ENCODE measurements at regions of chr20 and their contacts with region 1.

Region 1: DNA sequence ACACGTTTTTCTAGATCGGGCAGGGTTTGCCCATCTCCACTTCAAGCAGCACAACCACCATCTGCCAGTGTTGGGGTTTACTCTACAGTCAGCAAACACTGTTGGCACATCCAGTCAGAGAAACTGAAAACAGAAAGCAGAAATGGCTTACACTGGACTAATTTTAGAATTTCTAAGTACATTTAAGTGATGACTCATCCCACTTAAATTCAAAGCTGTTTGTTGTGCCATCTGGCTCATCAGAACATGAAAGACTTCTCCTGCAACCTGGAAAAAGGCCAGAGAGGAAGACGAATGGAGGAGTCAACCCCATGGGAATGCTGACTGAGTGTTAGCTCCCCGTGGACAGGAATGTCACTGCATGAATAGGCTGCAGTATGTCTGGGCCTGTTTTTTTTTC is 21.8 kb downstream of the FAM209B start:
- DNase-seq: peak; percentile 35 to 55
- H3K4me3 ChIP-seq: no peak overlapping the region
- H3K4me3 Mint-ChIP-seq: no peak overlapping the region
- H3K27ac Mint-ChIP-seq: no peak overlapping the region
- H3K4me1 ChIP-seq: peaks cover 20% of the 10 kb centered on the region
- H3K4me1 Mint-ChIP-seq: peaks cover 21% of the 10 kb centered on the region
- H3K27me3 ChIP-seq: no peaks in the 10 kb centered on the region
- H3K27me3 Mint-ChIP-seq: no peaks in the 10 kb centered on the region
- CTCF ChIP-seq: no peak

Region 2: DNA sequence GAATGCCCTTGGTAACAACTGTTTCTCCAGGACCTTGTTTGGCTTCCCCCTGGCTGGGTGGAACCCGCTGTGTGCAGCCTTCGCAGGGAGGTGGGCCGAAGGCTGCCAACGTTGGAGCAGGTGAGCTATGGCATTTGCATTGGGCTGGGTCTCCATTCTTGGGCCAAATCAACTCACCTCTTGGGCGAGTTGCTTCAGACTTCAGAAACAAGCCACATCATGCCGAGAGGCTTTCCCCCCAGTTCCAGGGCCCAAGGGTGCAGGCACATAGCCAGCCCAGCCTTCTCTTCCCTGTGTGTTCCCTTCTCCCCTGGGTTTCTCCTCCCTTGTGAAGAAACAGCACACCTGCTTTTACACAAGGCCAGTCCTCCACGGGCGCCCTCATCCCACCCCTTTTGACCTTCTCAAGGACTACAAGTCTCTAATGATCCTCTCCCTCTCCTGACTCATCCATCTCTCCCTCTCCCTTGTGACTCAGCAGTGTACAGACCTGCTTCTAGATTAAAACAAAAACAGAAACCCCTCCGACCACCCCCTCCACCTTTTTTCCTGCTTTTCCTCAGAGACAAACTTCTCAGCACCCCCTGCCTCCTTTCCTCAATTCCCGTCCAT is 19.8 kb after region 1 on chr20:
- CTCF ChIA-PET with region 1: interaction called, 62 read pairs
- POLR2A ChIA-PET with region 1: no interaction called
- intact Hi-C with region 1: loop called (anchors 1 kb)
- DNase-seq: no peak
- H3K4me3 ChIP-seq: no peak overlapping the region
- H3K4me3 Mint-ChIP-seq: no peak overlapping the region
- H3K27ac Mint-ChIP-seq: peak overlapping the region; percentile 4
- H3K4me1 ChIP-seq: peaks cover 12% of the 10 kb centered on the region
- H3K4me1 Mint-ChIP-seq: peaks cover 19% of the 10 kb centered on the region
- H3K27me3 ChIP-seq: no peaks in the 10 kb centered on the region
- H3K27me3 Mint-ChIP-seq: no peaks in the 10 kb centered on the region
- CTCF ChIP-seq: no peak

Region 3: DNA sequence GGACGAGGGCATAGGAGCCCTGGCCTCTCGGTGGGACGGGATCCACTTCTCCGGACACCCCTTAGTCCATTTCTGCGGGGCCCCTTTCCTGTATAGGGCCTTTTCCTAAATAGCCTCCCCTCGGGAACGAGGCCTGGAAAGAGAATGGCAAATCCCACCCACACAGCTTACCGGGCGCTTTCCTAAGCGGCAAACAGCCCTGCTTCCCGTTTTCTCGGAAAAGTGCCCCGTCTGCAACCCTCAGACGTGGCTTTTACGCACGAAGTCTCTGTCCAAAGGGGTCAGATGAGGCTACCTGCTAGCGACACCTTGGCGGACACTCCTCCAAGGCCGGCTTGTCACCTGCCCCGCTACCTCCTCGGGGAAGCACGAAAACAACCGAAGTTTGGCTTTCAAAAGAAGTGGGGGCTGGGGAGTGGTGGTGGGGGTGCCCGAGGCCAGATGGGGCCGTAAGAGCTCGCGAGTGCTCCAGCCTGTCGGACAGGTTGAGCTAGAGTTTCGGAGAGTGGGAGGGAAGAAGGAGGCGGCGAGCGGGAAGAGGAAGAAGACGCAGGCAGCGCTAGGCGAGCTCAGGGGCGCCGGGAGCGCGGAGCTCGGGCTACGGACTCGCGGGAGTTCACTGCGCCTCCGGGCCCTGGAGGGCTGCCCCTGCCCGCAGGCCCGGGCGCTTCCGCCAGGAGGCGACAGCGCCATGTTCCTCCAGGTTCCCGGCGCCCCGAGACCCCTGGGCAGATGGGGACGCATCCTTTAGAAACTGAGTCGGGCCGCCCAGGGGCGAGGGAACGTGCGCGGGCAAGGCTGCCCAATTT is 75.0 kb after region 1 on chr20:
- CTCF ChIA-PET with region 1: interaction called, 15 read pairs
- POLR2A ChIA-PET with region 1: no interaction called
- intact Hi-C with region 1: loop called (anchors 1 kb)
- DNase-seq: peak; percentile 94 to 95
- H3K4me3 ChIP-seq: peak overlapping the region; percentile 75
- H3K4me3 Mint-ChIP-seq: peak overlapping the region; percentile 79
- H3K27ac Mint-ChIP-seq: peak overlapping the region; percentile 64
- H3K4me1 ChIP-seq: peaks cover 6% of the 10 kb centered on the region; the same call in 1 of the 2 replicates
- H3K4me1 Mint-ChIP-seq: peaks cover 6% of the 10 kb centered on the region
- H3K27me3 ChIP-seq: no peaks in the 10 kb centered on the region
- H3K27me3 Mint-ChIP-seq: no peaks in the 10 kb centered on the region
- CTCF ChIP-seq: peak; percentile 95 to 96

Region 4: DNA sequence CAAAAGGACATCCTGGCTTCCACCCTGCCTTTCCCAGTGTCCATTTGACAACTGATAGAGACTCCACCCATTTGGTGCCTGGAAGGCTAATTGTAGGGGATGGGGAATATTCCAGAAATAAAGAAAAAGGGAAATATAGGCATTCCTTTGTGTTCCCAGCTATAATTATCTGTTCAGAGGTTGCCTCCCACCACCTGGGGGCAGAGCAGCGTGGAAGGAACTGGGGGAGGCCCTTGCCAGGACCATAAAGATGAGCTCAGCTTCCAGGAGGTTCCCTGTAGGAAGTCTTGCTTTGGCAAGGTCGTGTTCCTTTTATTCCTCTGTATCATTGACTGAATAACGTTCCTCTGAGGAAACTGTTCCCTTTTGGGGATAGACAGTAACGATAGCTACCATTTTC is 288.9 kb after region 1 on chr20:
- CTCF ChIA-PET with region 1: interaction called, 4 read pairs
- POLR2A ChIA-PET with region 1: no interaction called
- intact Hi-C with region 1: loop called (anchors 10 kb)
- DNase-seq: peak in 1 of 2 experiments; percentile 59
- H3K4me3 ChIP-seq: no peak overlapping the region
- H3K4me3 Mint-ChIP-seq: no peak overlapping the region
- H3K27ac Mint-ChIP-seq: no peak overlapping the region
- H3K4me1 ChIP-seq: no peaks in the 10 kb centered on the region
- H3K4me1 Mint-ChIP-seq: no peaks in the 10 kb centered on the region
- H3K27me3 ChIP-seq: no peaks in the 10 kb centered on the region; the same call in 1 of the 2 replicates
- H3K27me3 Mint-ChIP-seq: peaks cover 8% of the 10 kb centered on the region
- CTCF ChIP-seq: peak; percentile 39 to 61

Region 5: DNA sequence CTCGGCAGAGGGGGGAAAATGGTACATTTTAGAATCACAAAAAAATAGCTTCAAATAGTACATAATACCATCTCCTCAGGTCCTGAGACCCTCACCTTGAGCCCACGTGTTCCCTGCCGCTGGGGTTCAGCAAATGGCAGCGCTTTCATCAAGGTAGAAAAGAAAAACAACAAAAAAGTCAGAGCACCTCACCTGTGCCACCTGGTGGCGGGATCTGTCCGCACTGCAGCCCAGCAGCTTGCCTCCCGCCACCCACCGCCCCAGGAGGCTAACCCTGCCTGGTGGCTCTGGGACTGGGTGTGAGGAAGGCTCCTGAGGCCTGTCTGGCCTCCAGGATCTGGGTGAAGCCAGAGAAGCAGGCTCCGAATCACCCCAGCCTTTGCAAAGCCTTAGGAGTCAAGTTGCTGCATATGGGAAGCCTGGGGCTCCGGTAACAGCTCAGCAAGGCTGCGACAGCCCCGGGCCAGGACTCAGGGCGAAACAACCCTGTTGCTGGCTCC is 440.8 kb after region 1 on chr20:
- CTCF ChIA-PET with region 1: interaction called, 4 read pairs
- POLR2A ChIA-PET with region 1: no interaction called
- intact Hi-C with region 1: loop called (anchors 1 kb)
- DNase-seq: peak; percentile 73 to 74
- H3K4me3 ChIP-seq: no peak overlapping the region
- H3K4me3 Mint-ChIP-seq: no peak overlapping the region
- H3K27ac Mint-ChIP-seq: no peak overlapping the region
- H3K4me1 ChIP-seq: peaks cover 11% of the 10 kb centered on the region
- H3K4me1 Mint-ChIP-seq: peaks cover 13% of the 10 kb centered on the region
- H3K27me3 ChIP-seq: no peaks in the 10 kb centered on the region
- H3K27me3 Mint-ChIP-seq: no peaks in the 10 kb centered on the region
- CTCF ChIP-seq: peak; percentile 75 to 95

Region 6: DNA sequence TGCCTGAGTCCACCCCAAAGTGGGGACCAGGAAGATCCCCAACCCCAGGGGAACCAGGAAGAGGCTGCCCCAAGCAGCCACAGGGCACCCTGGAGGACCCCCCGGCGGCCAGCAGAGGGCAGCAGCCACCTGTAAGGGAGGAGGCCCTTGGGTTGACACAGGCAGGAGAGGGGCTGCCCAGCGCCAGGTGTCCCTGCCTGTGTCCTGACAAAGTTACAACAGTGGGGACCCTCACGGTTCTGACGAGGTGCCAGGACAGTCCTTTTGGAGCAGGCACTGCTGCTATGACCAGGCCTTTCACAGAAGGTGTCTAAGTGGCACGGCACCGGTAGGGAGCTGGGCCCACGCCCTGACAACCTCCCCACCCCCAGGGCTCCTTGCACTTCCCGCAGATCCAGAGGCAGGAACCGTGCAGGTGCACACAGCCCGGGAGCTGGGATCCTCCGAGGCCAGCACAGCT is 534.9 kb after region 1 on chr20:
- CTCF ChIA-PET with region 1: interaction called, 3 read pairs
- POLR2A ChIA-PET with region 1: no interaction called
- intact Hi-C with region 1: loop called (anchors 1 kb)
- DNase-seq: peak; percentile 92 to 97
- H3K4me3 ChIP-seq: no peak overlapping the region
- H3K4me3 Mint-ChIP-seq: no peak overlapping the region
- H3K27ac Mint-ChIP-seq: peak overlapping the region; percentile 1
- H3K4me1 ChIP-seq: peaks cover 7% of the 10 kb centered on the region
- H3K4me1 Mint-ChIP-seq: peaks cover 18% of the 10 kb centered on the region
- H3K27me3 ChIP-seq: no peaks in the 10 kb centered on the region
- H3K27me3 Mint-ChIP-seq: peaks cover 4% of the 10 kb centered on the region
- CTCF ChIP-seq: peak; percentile 100